Activated CD8-positive, alpha-beta T cell treated with anti-CD3 and anti-CD28 coated beads for 36 hours (primary cell): ENCODE measurements at regions of chr11 and their contacts with region 1.

Region 1: GRCh38 chr11:61158616-61159381 is 2.4 kb downstream of the VPS37C start:
- DNase-seq: no peak
- ATAC-seq: no peak
- H3K4me3 Mint-ChIP-seq: no peak overlapping the region
- H3K27ac Mint-ChIP-seq: peak overlapping the region; percentile 23
- H3K4me1 Mint-ChIP-seq: peaks cover 43% of the 10 kb centered on the region
- H3K27me3 Mint-ChIP-seq: no peaks in the 10 kb centered on the region
- CTCF ChIP-seq: no peak

Region 2: GRCh38 chr11:61173456-61173855 is 14.7 kb after region 1 on chr11:
- CTCF ChIA-PET with region 1: interaction called, 13 read pairs
- POLR2A ChIA-PET with region 1: interaction called, 7 read pairs
- intact Hi-C with region 1: no loop called
- DNase-seq: no peak
- ATAC-seq: no peak
- H3K4me3 Mint-ChIP-seq: no peak overlapping the region
- H3K27ac Mint-ChIP-seq: no peak overlapping the region
- H3K4me1 Mint-ChIP-seq: peaks cover 17% of the 10 kb centered on the region
- H3K27me3 Mint-ChIP-seq: no peaks in the 10 kb centered on the region
- CTCF ChIP-seq: no peak

Region 3: DNA sequence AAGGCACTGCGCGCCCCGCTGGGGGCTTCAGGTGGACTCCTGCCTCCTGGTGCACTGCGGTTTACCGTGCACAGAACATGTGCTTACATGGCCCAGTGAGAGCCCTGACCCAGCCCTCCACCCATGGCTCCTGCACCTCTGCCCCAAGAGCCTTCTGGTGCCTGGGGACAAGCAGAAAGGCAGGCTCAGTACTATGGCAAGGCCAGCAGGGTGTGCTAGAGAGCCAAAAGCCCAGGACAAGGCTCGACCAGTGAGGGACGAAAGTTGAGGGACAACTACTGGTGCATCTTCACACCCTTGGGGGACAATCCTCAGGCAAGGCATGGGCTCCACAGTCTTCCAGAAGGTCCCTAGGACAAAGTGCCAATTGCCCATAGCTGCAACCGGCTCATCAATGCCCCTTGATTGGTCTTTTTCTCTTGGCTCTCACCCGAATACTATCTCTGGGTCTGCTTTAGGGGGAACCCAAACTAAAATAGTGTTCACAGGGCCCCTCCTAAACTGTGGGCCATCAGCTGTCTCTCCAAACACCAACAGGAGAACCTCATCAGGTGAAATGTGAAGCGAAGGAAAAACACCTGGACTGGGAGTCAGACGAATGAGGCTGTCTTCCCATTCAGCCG is 95.7 kb after region 1 on chr11:
- CTCF ChIA-PET with region 1: no interaction called
- POLR2A ChIA-PET with region 1: no interaction called
- intact Hi-C with region 1: no loop called
- DNase-seq: peak; percentile 73
- ATAC-seq: peak; percentile 98
- H3K4me3 Mint-ChIP-seq: no peak overlapping the region
- H3K27ac Mint-ChIP-seq: no peak overlapping the region
- H3K4me1 Mint-ChIP-seq: no peaks in the 10 kb centered on the region
- H3K27me3 Mint-ChIP-seq: no peaks in the 10 kb centered on the region
- CTCF ChIP-seq: peak; percentile 90